Right cardiac atrium (tissue), 5 donors: ENCODE measurements at regions of chr1 and their contacts with region 1.

Region 1: DNA sequence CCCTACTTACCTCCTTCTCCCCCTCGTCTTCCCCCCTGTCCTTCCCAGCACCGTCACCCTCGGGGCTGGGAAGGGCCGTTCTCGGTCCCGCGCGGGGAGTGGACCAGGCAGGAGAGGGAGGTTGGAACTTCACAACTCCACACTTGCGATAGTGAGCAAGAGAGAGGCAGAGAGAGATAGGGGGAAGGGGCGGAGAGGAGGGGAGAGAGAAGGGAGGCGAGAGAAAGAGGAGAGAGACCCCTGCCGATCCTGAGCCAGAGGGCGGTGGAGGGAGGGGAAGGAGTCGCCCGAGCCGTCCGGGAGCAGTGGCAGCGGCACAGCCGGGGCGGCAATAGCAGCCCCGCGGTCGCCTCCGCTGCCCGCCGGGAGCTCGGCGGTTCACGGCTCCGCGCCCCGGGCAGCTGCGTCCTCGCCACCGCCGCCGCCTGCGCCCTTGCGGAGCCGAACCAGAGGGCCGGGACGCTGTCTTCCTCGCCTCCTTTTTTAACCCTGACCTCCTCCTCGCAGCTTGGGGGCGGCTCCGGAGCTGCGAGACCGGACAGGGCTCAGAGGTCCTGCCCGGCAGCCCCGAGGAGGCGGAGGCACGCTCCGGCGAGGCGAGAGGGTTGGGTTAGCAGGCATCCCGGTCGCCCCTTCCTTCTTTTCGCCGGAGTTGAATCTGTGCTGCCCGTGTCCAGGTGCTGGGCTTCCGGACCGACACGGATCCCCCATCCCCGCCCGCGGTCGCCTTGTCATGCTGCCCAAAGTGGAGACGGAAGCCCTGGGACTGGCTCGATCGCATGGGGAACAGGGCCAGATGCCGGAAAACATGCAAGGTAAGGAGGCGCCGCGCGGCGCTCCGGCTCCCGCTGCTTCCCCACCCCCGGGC is 11.7 kb downstream of the NR5A2 start:
- DNase-seq: peak in 1 of 3 donors; percentile 57
- ATAC-seq: peak; percentile 33 to 55
- H3K4me3 ChIP-seq: peak overlapping the region; percentile 31
- H3K27ac ChIP-seq: no peak overlapping the region
- H3K4me1 ChIP-seq: no peaks in the 10 kb centered on the region
- H3K27me3 ChIP-seq: no peaks in the 10 kb centered on the region

Region 2: DNA sequence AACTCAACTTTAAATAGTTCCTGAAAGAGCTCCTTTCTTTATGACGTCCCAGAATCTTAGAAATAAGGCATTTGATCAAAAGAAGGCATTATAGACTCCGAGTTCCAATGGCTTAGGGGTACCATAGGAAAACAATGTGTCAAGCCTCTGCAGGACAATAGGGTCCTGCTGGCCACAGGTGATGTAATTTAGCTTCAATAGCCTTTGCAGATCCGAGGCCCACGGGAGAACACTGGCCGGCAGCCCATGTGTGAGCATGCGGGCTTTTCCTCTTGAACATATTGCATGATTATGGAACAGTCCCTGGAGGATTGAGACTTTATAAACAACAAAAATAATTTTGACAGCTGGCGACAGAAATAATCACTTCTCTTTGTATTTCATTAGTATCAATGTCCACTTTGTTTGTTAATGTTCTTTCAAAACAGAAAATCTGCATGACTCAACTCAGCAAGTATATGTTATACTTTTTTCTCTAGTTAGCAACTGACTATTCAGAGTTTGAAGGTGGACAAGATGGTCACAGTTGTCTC is 60.7 kb before region 1 on chr1:
- intact Hi-C with region 1: no loop called
- DNase-seq: no peak
- ATAC-seq: no peak
- H3K4me3 ChIP-seq: no peak overlapping the region
- H3K27ac ChIP-seq: no peak overlapping the region
- H3K4me1 ChIP-seq: peaks cover 1% of the 10 kb centered on the region
- H3K27me3 ChIP-seq: no peaks in the 10 kb centered on the region

Region 3: GRCh38 chr1:200079232-200079940 is 40.2 kb after region 1 on chr1:
- intact Hi-C with region 1: loop called in 1 of 4 experiments (anchors 2 kb)
- DNase-seq: no peak
- ATAC-seq: no peak
- H3K4me3 ChIP-seq: no peak overlapping the region
- H3K27ac ChIP-seq: no peak overlapping the region
- H3K4me1 ChIP-seq: peaks cover 5% of the 10 kb centered on the region
- H3K27me3 ChIP-seq: no peaks in the 10 kb centered on the region